ENCODE measurements at regions of chr12 and their contacts with region 1.

Region 1: GRCh38 chr12:52156736-52157565 is 34.9 kb downstream of the KRT80 start:
- DNase-seq: peak; percentile 88
- ATAC-seq: peak; percentile 80
- H3K4me3 ChIP-seq: no peak overlapping the region
- H3K27ac ChIP-seq: no peak overlapping the region
- H3K4me1 ChIP-seq: peaks cover 9% of the 10 kb centered on the region
- H3K27me3 ChIP-seq: peaks cover 4% of the 10 kb centered on the region
- CTCF ChIP-seq: peak; percentile 92

Region 2: DNA sequence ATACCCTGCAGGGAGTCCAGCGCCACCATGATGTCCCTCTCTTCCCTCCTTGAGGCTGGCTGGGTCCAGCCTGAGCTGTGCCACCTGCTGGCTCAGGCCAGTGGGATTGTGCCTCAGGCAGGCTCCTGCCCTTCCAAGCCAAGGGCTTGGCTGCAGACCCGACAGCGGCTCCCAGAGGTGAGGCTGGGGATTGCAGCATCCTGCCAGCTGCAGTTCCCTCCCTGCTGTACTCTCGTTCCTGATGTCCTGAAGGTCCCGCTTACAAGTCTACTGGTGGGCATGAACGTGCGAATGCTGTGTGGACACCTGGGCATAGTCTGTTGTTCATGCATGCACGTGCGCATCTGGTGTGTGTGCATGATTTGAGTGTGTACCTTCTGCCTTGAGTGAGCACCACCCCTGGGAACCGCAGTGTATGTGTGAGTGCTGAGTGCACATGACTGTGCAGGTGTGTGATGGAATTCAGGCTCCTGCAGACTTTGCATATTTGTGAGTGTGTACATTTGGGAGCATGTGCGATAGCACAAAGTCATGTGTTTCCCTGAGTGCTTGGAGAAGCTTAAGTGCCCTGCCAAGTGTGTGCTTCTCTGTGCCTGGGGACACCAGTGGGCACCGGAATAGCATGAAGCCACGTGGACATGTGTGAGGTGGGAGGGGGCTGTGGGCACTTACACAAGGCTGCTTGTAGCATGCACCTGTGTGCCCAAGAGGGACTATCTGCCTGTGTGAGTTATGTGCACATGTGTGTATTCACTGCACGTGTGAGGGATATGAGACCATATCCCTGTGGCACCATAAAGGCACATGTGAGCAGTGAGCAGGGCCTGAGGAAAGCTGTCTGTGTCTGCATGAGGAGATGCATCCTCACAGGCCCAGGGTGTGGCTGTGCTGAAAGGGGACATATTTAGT is 56.8 kb after region 1 on chr12:
- intact Hi-C with region 1: loop called (anchors 5 kb)
- DNase-seq: peak; percentile 91
- ATAC-seq: peak; percentile 91
- H3K4me3 ChIP-seq: no peak overlapping the region
- H3K27ac ChIP-seq: peak overlapping the region; percentile 30
- H3K4me1 ChIP-seq: peaks cover 14% of the 10 kb centered on the region
- H3K27me3 ChIP-seq: no peaks in the 10 kb centered on the region
- CTCF ChIP-seq: peak; percentile 95

Region 3: GRCh38 chr12:52327052-52327829 is 170.3 kb after region 1 on chr12:
- intact Hi-C with region 1: loop called (anchors 5 kb)
- DNase-seq: peak; percentile 82
- ATAC-seq: peak; percentile 96
- H3K4me3 ChIP-seq: no peak overlapping the region
- H3K27ac ChIP-seq: no peak overlapping the region
- H3K4me1 ChIP-seq: no peaks in the 10 kb centered on the region
- H3K27me3 ChIP-seq: no peaks in the 10 kb centered on the region
- CTCF ChIP-seq: peak; percentile 87